PC-9 (cell line): ENCODE measurements at regions of chr2 and their contacts with region 1.

Region 1: DNA sequence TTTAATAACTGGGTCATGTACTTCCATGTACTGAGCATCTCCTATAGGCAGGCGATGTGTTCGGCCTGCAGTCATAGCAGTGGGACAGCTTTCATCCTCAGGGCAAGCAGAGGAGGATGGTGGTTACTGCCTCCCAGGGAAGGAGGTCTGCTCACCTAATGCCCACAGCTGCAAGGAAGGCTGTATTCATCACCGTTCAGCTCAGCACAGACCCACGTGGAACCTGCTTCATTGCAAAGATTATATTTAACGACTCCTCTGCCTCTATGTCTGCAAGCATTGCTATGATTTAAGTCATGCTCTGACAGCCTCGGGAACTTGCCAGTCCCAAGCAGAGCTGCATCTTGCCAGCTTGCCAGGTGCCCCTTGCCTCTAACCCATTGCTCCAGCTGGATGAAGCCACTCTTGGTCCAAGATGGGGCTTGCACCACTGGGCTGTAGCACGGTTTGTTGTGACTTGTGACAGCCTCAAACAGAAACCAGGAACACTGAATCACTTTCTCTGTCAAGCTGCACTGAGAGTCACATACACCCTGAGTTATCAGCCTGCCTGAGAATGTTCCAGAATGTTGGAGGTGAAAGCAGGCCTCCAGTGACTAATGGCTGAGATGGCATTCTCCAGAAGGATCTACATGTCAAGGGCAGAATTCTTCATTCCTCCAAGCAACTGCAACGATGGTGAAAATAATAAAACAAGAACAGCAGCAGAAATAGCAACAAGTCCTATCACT is 651.1 kb upstream of the ID2 start:
- DNase-seq: no peak
- H3K4me3 ChIP-seq: no peak overlapping the region
- H3K27ac ChIP-seq: no peak overlapping the region
- H3K4me1 ChIP-seq: no peaks in the 10 kb centered on the region
- H3K27me3 ChIP-seq: peaks cover 53% of the 10 kb centered on the region
- CTCF ChIP-seq: no peak

Region 2: DNA sequence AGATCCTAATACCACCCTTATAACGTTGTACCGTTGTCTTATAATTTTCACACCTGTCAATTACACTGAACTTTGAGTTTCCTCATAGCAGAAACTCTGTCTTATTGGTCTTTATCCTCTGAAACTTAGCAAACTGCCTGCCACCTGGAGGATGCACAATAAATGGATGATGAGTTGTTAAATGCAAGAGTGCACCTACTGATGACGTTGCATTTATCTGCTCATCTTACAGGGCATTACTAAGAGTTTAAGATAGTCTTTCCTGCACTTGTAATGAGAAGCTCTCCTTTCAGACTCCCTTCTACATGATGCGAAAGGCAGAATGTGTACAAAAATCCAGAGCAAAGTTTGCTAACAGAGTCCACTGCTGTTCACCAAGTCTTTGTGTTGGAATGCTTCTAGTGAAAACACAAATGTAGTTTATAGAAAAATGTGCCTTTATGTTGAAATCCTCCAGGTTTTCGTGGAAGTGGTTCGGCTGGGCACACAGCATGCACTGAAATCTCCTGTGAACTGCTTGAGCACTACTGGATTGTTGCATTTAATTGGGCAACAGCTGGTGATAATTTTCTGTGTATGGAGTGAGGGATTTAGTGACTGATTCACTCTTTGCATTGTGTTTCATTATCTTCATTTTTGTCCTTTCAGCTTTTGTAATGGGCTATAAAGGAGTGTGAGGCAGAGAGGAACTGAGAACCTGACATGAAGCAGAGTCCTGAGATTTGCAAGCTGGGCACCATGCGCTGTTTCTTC is 14.7 kb before region 1 on chr2:
- CTCF ChIA-PET with region 1: no interaction called
- POLR2A ChIA-PET with region 1: no interaction called
- intact Hi-C with region 1: no loop called
- DNase-seq: no peak
- H3K4me3 ChIP-seq: no peak overlapping the region
- H3K27ac ChIP-seq: no peak overlapping the region
- H3K4me1 ChIP-seq: no peaks in the 10 kb centered on the region
- H3K27me3 ChIP-seq: peaks cover 24% of the 10 kb centered on the region
- CTCF ChIP-seq: no peak

Region 3: GRCh38 chr2:8049851-8050571 is 19.3 kb after region 1 on chr2:
- CTCF ChIA-PET with region 1: no interaction called
- POLR2A ChIA-PET with region 1: interaction called, 10 read pairs
- intact Hi-C with region 1: no loop called
- DNase-seq: no peak
- H3K4me3 ChIP-seq: no peak overlapping the region
- H3K27ac ChIP-seq: no peak overlapping the region
- H3K4me1 ChIP-seq: no peaks in the 10 kb centered on the region
- H3K27me3 ChIP-seq: no peaks in the 10 kb centered on the region
- CTCF ChIP-seq: no peak